SK-N-SH (cell line): ENCODE measurements at regions of chr2 and their contacts with region 1.

Region 1: DNA sequence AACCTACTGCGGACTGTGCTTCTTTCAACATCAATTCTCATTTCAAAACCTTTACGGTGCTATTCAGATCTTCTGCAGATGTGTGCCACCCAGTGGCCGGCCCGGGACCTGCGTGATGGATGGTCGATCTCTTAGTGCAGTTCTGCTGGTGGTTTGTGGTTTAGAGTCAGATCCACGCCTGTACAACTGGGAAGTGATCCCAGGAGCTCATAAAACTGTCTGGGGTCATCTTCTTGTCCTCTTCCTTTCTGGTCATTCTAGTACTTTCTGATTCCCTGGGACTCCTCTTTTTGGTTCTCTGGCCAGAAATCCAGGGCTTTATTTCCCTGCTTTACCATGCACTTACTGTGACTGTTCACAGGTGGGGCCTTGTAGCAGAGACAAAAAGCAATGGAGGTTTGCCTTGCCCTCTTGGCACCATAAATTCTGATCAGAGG is 15.8 kb upstream of the SELENOI start:
- DNase-seq: peak; percentile 84
- H3K4me3 ChIP-seq: peak overlapping the region in 1 of 2 experiments; percentile 16; a peak in 1 of 4 replicates
- H3K27ac ChIP-seq: no peak overlapping the region
- H3K4me1 ChIP-seq: peaks cover 0 to 2% of the 10 kb centered on the region in 2 experiments; a peak in 1 of 4 replicates
- H3K27me3 ChIP-seq: no peaks in the 10 kb centered on the region
- CTCF ChIP-seq: peak; percentile 98
- EP300 ChIP-seq: no peak
- RAD21 ChIP-seq: peak; percentile 89

Region 2: DNA sequence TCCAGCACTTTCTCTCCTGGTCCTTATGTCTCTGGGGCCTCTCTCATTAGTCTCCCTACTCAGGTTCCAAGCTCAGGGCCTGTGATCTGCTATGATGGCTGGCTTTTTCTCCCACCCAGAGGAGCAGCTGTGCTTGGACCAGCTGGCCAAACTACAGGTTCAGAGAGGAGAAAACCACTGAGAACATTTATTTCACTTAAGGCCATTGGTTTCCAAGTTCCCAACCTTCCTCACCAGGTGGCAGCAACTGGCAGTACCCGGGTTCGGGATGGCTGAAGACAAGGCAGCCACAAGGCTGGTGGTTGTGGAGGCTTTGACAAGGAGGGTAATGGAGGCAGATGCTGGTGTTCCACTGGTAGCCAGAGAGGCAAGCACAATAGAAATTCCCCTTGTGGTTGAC is 14.1 kb before region 1 on chr2:
- CTCF ChIA-PET with region 1: interaction called, 68 read pairs
- POLR2A ChIA-PET with region 1: no interaction called
- DNase-seq: peak; percentile 54
- H3K4me3 ChIP-seq: no peak overlapping the region
- H3K27ac ChIP-seq: no peak overlapping the region
- H3K4me1 ChIP-seq: peaks cover 0 to 5% of the 10 kb centered on the region in 2 experiments; a peak in 1 of 4 replicates
- H3K27me3 ChIP-seq: peaks cover 10% of the 10 kb centered on the region; the same call in 1 of the 2 replicates
- CTCF ChIP-seq: peak; percentile 39
- EP300 ChIP-seq: no peak
- RAD21 ChIP-seq: peak; percentile 51

Region 3: GRCh38 chr2:26345545-26346453 is 15.7 kb after region 1 on chr2 and contains the start of gene SELENOI:
- CTCF ChIA-PET with region 1: interaction called, 16 read pairs
- POLR2A ChIA-PET with region 1: interaction called, 3 read pairs
- DNase-seq: peak; percentile 100
- H3K4me3 ChIP-seq: peak within 1 kb of the TSS; percentile 90 to 95
- H3K27ac ChIP-seq: peak within 1 kb of the TSS; percentile 87 to 95
- H3K4me1 ChIP-seq: peaks cover 10 to 23% of the 10 kb centered on the region in 2 experiments; a peak in 3 of 4 replicates
- H3K27me3 ChIP-seq: no peaks in the 10 kb centered on the region
- CTCF ChIP-seq: no peak
- EP300 ChIP-seq: peak in 1 of 2 experiments; percentile 46; a peak in 1 of 4 replicates
- RAD21 ChIP-seq: no peak; the same call in 1 of the 2 replicates
- polyA plus RNA-seq, gene SELENOI: 4.4 and 6.2 TPM in 2 replicates